Activated CD4-positive, alpha-beta T cell treated with anti-CD3 and anti-CD28 coated beads, Interleukin-2, amount 10 ng/mL, durations not matched to agents 24 days and 14 days (primary cell): ENCODE measurements at regions of chr1 and their contacts with region 1.

Region 1: DNA sequence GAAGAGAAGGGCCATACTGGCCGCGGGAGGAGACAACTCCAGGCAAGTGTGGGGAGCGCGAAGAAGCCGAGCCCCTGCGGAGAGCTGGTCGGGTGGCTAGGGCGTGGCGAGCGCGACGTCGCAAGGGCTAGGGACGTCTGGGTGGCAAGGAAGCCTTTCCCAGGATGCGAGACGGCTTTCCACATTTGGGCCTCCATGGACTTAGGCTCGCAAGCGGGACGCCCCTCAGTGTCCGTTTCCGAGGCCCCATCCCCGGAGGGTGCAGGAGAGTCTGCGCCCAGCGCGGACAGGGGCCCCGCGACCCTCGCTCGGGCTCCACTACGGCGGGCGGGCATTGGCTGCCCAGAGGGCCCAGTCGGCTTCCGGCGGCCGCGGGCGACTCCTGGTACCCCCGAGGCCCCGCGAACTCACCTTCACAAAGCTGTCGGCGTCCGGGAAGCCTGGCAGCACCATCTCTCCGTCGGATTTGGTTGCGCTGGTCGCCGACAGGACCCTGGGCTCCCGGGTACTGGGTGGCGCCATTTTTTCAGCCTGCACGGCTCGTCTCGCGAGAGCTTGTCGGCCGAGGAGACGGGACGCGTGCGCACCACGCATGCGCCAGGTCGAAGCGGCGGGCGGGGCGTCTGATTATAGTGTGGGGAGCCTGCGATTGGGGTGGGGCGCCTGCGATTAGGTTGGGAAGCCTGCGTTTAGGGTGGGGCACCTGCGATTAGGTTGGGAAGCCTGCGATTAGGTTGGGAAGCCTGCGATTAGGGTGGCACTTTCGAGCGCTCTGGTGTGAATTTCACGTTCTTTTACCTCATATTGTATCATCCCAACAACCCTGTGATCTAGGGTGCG is at the start of gene EXOSC10:
- DNase-seq: peak; percentile 99
- H3K4me3 Mint-ChIP-seq: peak within 1 kb of the TSS; percentile 99
- H3K27ac Mint-ChIP-seq: peak within 1 kb of the TSS; percentile 96
- H3K4me1 Mint-ChIP-seq: peaks cover 12% of the 10 kb centered on the region
- H3K27me3 Mint-ChIP-seq: no peaks in the 10 kb centered on the region
- total RNA-seq, gene EXOSC10: 93.0 and 98.1 TPM in 2 replicates

Region 2: DNA sequence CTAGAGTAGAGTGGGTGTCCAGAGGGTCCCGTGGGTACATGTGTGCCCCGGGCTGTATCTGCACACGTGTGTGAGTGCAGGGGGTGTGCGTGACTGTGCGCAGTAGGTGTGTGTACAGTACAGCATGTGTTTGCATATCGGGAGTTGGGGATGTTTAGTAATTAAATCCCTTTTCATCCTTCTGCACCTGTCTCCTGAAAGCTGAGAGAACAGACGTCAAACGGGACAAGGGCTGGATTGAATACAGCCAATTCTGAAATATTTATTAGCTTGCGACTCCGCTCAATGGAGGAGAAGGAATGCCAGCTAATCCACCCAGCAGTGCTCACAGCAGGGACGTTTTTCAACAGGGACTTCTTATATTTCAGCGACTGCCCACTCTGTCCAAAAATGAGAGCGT is 258.4 kb before region 1 on chr1:
- intact Hi-C with region 1: no loop called
- DNase-seq: no peak
- H3K4me3 Mint-ChIP-seq: no peak overlapping the region
- H3K27ac Mint-ChIP-seq: no peak overlapping the region
- H3K4me1 Mint-ChIP-seq: no peaks in the 10 kb centered on the region
- H3K27me3 Mint-ChIP-seq: peaks cover 20% of the 10 kb centered on the region

Region 3: DNA sequence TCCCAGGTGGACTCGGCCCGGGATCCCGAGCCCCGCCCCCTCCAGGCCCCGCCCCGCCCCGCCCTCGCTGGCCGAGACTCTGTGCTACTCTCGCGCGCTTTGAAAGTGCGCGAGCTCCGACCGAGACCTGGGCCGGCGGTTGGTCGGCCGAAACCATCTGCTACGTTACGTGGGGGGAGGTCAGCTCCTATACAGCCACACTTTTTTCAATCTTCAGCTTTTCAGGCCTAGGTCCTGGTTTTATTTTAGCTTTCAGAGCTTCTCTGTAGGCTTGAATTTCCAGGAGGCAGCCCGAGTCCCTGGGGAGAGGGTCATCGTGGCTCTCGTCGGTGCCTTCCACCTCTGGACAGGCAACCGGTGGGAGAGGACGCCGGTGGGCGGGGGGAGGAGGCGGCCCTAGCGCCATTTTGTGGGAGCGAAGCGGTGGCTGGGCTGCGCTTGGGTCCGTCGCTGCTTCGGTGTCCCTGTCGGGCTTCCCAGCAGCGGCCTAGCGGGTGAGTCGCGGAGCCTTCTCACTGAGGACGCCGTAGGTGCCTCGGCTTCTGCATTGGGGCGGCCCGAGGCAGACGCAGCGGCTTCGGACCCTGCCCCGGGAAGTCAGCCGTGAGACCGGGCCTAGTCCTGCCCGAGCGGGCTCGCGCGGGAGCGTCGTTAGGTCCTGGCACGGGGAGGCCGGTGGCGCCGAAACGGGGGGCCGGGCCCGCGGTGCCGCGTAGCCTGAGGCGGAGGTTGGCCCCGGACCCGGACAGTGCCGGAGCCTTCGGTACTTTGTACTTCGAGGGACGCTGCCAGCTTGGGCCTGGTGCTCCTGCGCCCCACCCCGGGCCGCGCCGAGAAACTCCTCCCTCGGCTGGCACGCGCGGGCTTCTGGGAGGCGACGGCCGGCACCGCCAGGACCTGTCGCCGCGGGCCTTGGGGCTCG is 87.0 kb before region 1 on chr1 and contains the start of gene TARDBP:
- intact Hi-C with region 1: loop called (anchors 5 kb)
- DNase-seq: peak; percentile 97
- H3K4me3 Mint-ChIP-seq: peak within 1 kb of the TSS; percentile 88
- H3K27ac Mint-ChIP-seq: peak within 1 kb of the TSS; percentile 98
- H3K4me1 Mint-ChIP-seq: peaks cover 18% of the 10 kb centered on the region
- H3K27me3 Mint-ChIP-seq: no peaks in the 10 kb centered on the region
- total RNA-seq, gene TARDBP: 211 and 224 TPM in 2 replicates

Region 4: GRCh38 chr1:11037740-11038182 is 61.8 kb before region 1 on chr1:
- intact Hi-C with region 1: loop called (anchors 10 kb)
- DNase-seq: peak; percentile 96
- H3K4me3 Mint-ChIP-seq: no peak overlapping the region
- H3K27ac Mint-ChIP-seq: no peak overlapping the region
- H3K4me1 Mint-ChIP-seq: peaks cover 7% of the 10 kb centered on the region
- H3K27me3 Mint-ChIP-seq: no peaks in the 10 kb centered on the region

Region 5: GRCh38 chr1:11053758-11054137 is 45.8 kb before region 1 on chr1:
- intact Hi-C with region 1: no loop called
- DNase-seq: no peak
- H3K4me3 Mint-ChIP-seq: no peak overlapping the region
- H3K27ac Mint-ChIP-seq: no peak overlapping the region
- H3K4me1 Mint-ChIP-seq: peaks cover 4% of the 10 kb centered on the region
- H3K27me3 Mint-ChIP-seq: no peaks in the 10 kb centered on the region